ENCODE measurements at regions of chr3 and their contacts with region 1.

Region 1: DNA sequence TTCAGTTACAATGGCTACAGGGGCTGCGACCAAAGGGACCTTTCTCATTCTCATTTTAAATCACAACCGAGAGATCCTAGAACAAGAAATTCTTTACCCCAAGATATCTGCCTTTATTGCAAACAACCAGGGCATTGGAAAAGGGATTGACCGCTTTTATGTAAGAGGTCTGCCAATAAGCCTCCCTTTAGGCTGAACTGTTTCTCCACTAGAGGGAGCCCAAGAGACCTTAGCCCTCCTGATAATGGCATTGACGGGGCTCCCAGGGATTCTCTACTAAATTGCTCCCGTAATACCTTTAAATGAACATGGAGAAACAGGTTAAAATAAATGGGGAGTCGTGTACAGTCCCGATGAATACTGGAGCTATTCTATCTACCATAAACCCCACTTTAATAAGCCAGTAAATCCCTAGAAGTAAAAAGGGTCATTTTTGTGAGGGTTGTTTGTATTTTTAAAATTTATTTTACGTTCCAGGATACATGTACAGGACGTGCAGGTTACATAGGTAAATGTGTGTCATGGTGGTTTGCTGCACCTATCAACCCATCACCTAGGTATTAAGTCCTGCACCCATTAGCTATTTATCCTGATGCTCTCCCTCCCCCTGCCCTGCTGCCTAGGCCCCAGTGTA is 7.5 kb upstream of the IGSF10 start:
- DNase-seq: peak; percentile 42
- H3K4me3 ChIP-seq: no peak overlapping the region
- H3K27ac ChIP-seq: no peak overlapping the region
- H3K27me3 ChIP-seq: peaks cover 4% of the 10 kb centered on the region
- CTCF ChIP-seq: peak; percentile 94

Region 2: DNA sequence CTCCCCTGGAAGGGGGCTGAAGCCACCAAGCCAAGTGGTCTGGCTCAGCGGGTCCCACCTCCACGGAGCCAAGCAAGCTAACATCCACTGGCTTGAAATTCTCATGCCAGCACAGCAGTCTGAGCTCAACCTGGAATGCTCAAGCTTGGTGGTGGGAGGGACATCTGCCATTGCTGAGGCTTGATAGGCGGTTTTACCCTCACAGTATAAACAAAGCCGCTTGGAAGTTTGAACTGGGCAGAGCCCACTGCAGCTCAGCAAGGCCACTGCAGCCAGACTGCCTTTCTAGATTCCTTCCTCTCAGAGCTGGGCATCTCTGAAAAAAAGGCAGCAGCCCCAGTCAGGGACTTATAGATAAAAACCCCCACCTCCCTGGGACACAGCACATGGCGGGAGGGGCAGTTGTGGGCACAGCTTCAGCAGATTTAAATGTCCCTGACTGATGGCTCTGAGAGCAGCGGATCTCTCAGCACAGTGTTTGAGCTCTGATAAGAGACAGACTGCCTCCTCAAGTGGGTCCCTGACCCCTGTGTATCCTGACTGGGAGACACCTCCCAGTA is 15.6 kb after region 1 on chr3:
- CTCF ChIA-PET with region 1: interaction called, 21 read pairs
- POLR2A ChIA-PET with region 1: no interaction called
- DNase-seq: no peak
- H3K4me3 ChIP-seq: no peak overlapping the region
- H3K27ac ChIP-seq: no peak overlapping the region
- H3K27me3 ChIP-seq: no peaks in the 10 kb centered on the region
- CTCF ChIP-seq: no peak

Region 3: DNA sequence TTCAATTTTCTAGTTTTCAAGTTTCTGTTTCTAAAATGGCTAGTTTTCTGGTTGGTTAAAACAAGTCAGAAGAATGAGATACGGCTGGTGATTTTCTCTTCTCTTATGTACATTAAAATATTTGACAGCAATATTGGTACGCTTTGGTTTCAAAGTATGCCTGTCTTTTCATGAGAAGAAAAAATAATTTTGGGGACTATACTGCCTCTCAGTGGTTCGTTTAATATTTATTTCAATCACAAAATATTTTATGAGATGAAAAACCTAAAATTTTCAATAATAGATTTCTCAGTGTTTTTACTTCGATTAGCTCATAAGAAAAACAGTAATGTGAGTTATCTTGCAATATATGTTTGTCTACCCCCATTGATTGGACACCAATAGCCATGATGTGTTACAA is 192.5 kb after region 1 on chr3:
- CTCF ChIA-PET with region 1: interaction called, 11 read pairs
- POLR2A ChIA-PET with region 1: no interaction called
- DNase-seq: no peak
- H3K4me3 ChIP-seq: no peak overlapping the region
- H3K27ac ChIP-seq: no peak overlapping the region
- H3K27me3 ChIP-seq: no peaks in the 10 kb centered on the region
- CTCF ChIP-seq: peak; percentile 13; the same call in 1 of the 2 replicates

Region 4: DNA sequence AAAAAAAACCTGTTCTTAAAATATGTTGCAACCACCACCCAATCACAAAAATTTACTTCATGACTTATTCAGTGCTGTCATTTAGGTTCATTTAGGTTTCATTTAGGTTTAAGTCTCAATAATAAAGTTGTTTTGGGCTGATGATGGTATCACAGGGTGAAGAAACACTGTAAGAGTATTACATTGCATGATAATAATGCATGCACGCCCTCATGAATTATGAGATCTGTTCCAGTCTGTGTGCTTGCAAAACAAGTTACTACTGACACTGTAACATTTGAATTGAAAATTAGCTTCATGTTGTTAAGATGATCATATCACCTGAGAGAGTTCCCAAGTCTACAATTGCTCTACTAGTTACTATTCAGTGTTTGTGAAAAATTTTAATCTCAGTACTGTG is 265.2 kb after region 1 on chr3 and contains the start of gene AADACL2:
- CTCF ChIA-PET with region 1: no interaction called
- POLR2A ChIA-PET with region 1: no interaction called
- DNase-seq: no peak
- H3K4me3 ChIP-seq: no peak within 1 kb of the TSS
- H3K27ac ChIP-seq: no peak within 1 kb of the TSS
- H3K27me3 ChIP-seq: no peaks in the 10 kb centered on the region
- CTCF ChIP-seq: no peak
- polyA plus RNA-seq, gene AADACL2: not detected in 2 replicates

Region 5: DNA sequence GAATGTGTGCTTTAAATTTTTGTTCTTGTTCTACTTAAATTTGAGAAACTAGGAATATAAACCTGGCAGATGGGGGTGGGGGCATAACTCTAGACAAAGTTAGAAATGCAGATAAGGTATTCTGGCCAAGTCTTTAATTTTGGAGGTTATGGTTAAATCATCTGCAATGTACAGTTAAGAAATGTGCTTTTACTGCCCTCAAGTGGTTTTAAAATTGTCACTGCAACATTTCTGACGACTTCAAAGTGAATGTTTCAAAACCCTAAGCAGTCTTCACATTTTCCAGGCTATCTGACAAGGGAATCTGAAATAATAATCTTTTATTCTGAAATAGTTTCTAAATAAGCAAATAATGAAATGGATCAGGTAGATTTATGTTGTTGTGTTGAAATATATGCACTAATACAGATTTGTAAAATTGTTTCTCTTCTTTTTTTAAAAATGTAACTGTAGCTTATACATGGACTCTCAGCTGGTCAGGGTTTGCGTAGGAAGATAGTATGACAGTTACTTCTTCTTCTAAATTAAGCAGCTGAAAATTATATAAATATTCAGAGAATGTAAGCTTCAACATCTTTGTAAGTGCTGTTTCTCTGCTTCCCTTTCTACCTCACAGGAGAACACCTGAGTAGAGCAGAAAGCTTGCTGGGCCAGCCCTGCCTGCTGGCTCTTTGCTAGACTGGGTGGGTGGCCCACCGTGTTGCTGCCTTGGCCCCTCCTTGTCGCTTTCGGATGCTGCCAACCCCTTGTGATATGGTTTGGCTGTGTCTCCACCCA is 450.0 kb after region 1 on chr3:
- CTCF ChIA-PET with region 1: interaction called, 24 read pairs
- POLR2A ChIA-PET with region 1: no interaction called
- DNase-seq: peak; percentile 29
- H3K4me3 ChIP-seq: no peak overlapping the region
- H3K27ac ChIP-seq: no peak overlapping the region
- H3K27me3 ChIP-seq: no peaks in the 10 kb centered on the region
- CTCF ChIP-seq: peak; percentile 67

Measured in AG04450 (cell line).